Head of caudate nucleus (tissue), 42 donors: ENCODE measurements at regions of chr14 and their contacts with region 1.

Region 1: GRCh38 chr14:68824517-68825347 is 31.9 kb upstream of the ZFP36L1 start:
- DNase-seq: peak; percentile 44 to 90 (median 75)

Region 2: DNA sequence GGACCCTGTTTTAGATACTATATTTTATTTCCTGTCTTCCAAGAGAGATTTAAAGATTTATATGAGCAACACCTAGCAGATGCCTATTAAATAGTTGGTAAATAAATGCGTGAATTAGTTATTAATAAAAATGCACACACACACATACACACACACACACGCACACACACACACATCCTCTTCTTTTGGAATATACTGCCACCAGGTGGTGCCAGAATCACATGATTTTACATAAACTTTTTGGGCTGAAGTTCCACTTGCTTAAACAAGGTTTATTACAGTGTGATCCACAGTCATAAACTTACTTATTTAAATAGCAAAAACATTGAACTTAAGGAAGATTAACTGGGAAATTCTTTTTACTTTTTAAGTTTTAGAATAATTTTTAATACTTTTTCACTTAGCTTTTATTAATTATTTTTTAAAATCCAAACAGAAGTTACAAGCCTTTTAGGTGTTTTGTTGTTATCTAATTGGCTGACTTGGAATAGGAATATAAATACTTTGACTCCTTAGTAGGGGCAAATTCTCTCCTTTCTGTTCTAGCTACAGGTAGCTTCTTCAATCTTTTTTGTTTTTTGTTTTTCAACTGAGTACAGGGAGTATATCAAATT is 987.6 kb before region 1 on chr14:
- intact Hi-C with region 1: loop called (anchors 10 kb)
- DNase-seq: peak in 10 of 42 donors; percentile 18 to 49 (median 29)

Region 3: GRCh38 chr14:68248481-68249255 is 576.1 kb before region 1 on chr14:
- intact Hi-C with region 1: loop called (anchors 5 kb)
- DNase-seq: peak in 11 of 42 donors; percentile 2 to 53 (median 30)

Region 4: DNA sequence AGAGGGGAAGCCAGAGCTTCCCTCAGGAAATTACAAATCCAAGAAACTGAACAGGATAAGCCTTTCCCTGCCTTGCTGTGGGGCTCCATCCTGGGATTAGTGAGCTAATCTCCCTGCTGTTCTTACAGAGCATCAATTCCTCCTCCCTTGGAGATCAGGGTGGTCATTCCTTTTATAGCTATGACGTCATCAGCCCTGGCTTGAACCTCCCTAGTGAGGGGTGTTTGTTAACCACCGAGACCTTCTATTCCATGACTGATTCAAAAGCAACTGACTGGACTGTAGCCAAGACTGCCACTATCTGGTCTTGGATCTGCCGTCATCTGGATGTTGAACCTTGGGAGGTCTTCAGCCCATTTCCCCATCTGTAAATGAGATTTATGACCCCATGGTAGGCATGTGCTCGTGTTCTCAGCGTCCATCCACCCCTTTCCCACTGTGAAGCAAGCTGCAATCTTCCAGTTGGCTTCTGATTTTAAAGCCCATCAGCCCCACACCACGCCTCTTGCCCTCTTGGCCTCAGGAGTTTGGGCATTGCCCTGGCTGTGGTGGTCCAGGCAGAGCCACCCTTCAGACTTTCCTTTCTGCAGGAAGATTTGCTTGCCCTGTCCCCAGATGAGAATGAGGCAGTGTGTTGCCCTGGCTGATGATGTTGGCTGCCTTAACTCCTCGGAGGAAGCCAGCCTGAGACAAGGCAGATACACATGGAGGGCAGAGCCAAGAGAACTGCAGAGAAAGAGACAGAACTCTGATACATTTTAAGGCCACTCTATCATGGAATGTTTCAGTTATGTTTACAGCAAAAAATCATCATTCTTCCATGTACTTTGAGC is 213.9 kb after region 1 on chr14:
- intact Hi-C with region 1: no loop called
- DNase-seq: no peak